CD4-positive, alpha-beta T cell (primary cell): ENCODE measurements at regions of chr19 and their contacts with region 1.

Region 1: DNA sequence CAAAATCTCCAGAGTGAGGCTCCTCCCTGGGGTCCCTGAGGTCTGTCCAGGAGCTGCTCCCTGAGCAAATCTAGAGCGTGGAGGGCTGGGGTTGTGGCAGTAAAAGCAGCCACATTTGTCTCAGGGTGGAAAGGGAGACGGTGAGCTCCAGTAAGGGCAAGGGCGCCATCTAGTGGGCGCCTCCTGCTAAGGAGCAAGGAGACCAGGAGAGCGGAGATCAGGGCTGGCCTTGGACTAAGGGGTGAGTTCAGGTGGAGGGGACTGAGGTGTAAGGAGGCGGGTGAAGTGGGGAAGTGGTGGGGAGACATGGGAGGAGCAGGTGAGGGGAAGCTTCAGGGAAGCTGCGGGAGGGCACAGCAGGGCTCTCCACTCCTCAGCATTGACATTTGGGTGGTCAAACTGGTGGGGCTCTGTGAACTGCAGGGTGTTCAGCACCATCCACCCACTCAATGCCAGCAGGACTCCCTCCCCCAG is 5.3 kb upstream of the CEACAM21 start:
- DNase-seq: peak; percentile 74 to 93 (median 84)
- ATAC-seq: peak; percentile 97
- H3K4me3 ChIP-seq: no peak overlapping the region
- H3K4me3 Mint-ChIP-seq: no peak overlapping the region
- H3K27ac ChIP-seq: no peak overlapping the region
- H3K27ac Mint-ChIP-seq: peak overlapping the region; percentile 34
- H3K4me1 ChIP-seq: peaks cover 20% of the 10 kb centered on the region
- H3K4me1 Mint-ChIP-seq: peaks cover 44% of the 10 kb centered on the region
- H3K27me3 ChIP-seq: no peaks in the 10 kb centered on the region
- H3K27me3 Mint-ChIP-seq: no peaks in the 10 kb centered on the region
- CTCF ChIP-seq: peak; percentile 95

Region 2: GRCh38 chr19:41206926-41207750 is 363.5 kb before region 1 on chr19:
- CTCF ChIA-PET with region 1: interaction called, 4 read pairs
- POLR2A ChIA-PET with region 1: no interaction called
- intact Hi-C with region 1: loop called in 1 of 2 experiments (anchors 10 kb)
- DNase-seq: no peak
- ATAC-seq: no peak
- H3K4me3 ChIP-seq: no peak overlapping the region
- H3K4me3 Mint-ChIP-seq: no peak overlapping the region
- H3K27ac ChIP-seq: no peak overlapping the region
- H3K27ac Mint-ChIP-seq: peak overlapping the region; percentile 39
- H3K4me1 ChIP-seq: peaks cover 9% of the 10 kb centered on the region
- H3K4me1 Mint-ChIP-seq: no peaks in the 10 kb centered on the region
- H3K27me3 ChIP-seq: no peaks in the 10 kb centered on the region
- H3K27me3 Mint-ChIP-seq: no peaks in the 10 kb centered on the region
- CTCF ChIP-seq: no peak

Region 3: DNA sequence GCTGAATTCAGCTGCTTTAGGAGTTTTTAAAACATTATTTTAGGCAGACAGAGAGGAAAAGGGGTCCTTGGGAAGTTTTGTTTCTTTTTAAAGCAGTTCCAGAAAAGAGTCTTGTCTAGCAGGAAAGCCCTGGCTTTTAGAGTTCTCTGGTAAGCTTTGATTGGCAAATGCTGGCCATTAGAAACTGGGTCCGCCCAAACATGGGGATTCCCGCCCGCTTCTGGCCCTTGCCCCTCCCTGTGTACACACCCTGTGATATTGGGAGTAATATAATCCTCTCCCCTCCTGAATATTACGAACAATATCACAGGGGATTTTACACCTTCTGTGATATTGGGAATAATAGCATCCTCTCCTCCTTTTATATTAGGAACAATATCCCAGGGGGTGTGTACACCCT is 68.8 kb before region 1 on chr19:
- CTCF ChIA-PET with region 1: no interaction called
- POLR2A ChIA-PET with region 1: no interaction called
- intact Hi-C with region 1: no loop called
- DNase-seq: no peak
- ATAC-seq: no peak
- H3K4me3 ChIP-seq: no peak overlapping the region
- H3K4me3 Mint-ChIP-seq: no peak overlapping the region
- H3K27ac ChIP-seq: no peak overlapping the region
- H3K27ac Mint-ChIP-seq: no peak overlapping the region
- H3K4me1 ChIP-seq: no peaks in the 10 kb centered on the region
- H3K4me1 Mint-ChIP-seq: no peaks in the 10 kb centered on the region
- H3K27me3 ChIP-seq: peaks cover 5 to 15% of the 10 kb centered on the region in 2 experiments
- H3K27me3 Mint-ChIP-seq: peaks cover 74% of the 10 kb centered on the region
- CTCF ChIP-seq: no peak

Region 4: DNA sequence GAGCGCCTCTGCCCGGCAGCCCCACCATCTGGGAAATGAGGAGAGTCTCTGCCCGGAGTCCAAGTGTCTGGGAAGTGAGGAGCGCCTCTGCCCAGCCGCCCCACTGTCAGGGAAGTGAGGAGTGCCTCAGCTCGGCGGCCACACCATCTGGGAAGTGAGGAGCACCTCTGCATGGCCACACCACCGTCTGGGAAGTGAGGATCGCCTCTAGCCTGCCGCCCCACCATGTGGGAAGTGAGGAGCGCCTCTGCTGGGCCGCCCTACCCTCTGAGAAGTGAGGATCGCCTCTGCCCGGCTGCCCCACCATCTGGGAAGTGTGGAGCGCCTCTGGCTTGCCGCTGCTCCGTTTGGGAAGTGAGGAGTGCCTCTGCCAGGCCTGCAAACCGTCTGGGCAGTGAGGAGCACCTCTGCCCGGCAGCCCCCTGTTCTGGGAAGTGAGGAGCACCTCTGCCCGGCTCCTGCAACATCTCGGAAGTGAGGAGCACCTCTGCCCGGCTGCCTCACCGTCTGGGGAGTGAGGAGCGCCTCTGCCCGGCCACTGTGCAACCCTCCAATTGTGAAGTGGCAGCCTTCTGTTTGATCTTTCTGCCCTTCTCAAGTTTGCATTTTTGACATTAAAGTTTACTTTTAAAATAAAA is 55.5 kb before region 1 on chr19:
- CTCF ChIA-PET with region 1: interaction called, 7 read pairs
- POLR2A ChIA-PET with region 1: no interaction called
- intact Hi-C with region 1: loop called (anchors 1 to 2 kb)
- DNase-seq: no peak
- ATAC-seq: no peak
- H3K4me3 ChIP-seq: no peak overlapping the region
- H3K4me3 Mint-ChIP-seq: no peak overlapping the region
- H3K27ac ChIP-seq: no peak overlapping the region
- H3K27ac Mint-ChIP-seq: no peak overlapping the region
- H3K4me1 ChIP-seq: peaks cover 5% of the 10 kb centered on the region
- H3K4me1 Mint-ChIP-seq: peaks cover 9% of the 10 kb centered on the region
- H3K27me3 ChIP-seq: peaks cover 6 to 10% of the 10 kb centered on the region in 2 experiments
- H3K27me3 Mint-ChIP-seq: peaks cover 81% of the 10 kb centered on the region
- CTCF ChIP-seq: no peak

Region 5: GRCh38 chr19:41531438-41532311 is 39.0 kb before region 1 on chr19:
- CTCF ChIA-PET with region 1: interaction called, 9 read pairs
- POLR2A ChIA-PET with region 1: interaction called, 13 read pairs
- intact Hi-C with region 1: no loop called
- DNase-seq: peak; percentile 65 to 96 (median 80)
- ATAC-seq: peak; percentile 91
- H3K4me3 ChIP-seq: peak overlapping the region; percentile 42
- H3K4me3 Mint-ChIP-seq: peak overlapping the region; percentile 67
- H3K27ac ChIP-seq: peak overlapping the region; percentile 37 to 63
- H3K27ac Mint-ChIP-seq: peak overlapping the region; percentile 78
- H3K4me1 ChIP-seq: peaks cover 41% of the 10 kb centered on the region
- H3K4me1 Mint-ChIP-seq: peaks cover 51% of the 10 kb centered on the region
- H3K27me3 ChIP-seq: no peaks in the 10 kb centered on the region
- H3K27me3 Mint-ChIP-seq: no peaks in the 10 kb centered on the region
- CTCF ChIP-seq: no peak

Region 6: DNA sequence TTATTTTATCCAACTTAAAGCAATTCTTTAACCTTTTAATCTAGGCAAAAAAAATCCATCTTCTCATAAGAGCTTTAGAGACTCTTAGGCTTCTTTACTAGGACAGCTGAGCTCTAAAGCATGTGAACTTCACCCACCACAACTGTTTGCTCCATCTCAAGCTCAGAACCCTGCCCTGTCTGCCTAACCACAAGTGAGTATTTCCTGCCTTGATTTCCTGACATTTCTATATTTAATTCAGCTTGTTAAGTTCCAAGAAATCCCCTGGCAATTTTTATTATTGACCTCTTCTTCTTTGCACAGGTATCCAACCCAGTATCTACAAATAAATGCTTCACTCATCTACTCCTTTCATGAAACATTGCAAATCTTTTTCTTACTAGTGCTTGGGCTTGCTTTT is 15.8 kb before region 1 on chr19:
- CTCF ChIA-PET with region 1: interaction called, 29 read pairs
- POLR2A ChIA-PET with region 1: interaction called, 286 read pairs
- intact Hi-C with region 1: no loop called
- DNase-seq: peak in 6 of 14 experiments; percentile 32 to 84 (median 70)
- ATAC-seq: peak; percentile 72
- H3K4me3 ChIP-seq: peak overlapping the region; percentile 74
- H3K4me3 Mint-ChIP-seq: peak overlapping the region; percentile 97
- H3K27ac ChIP-seq: peak overlapping the region; percentile 42 to 63
- H3K27ac Mint-ChIP-seq: peak overlapping the region; percentile 82
- H3K4me1 ChIP-seq: peaks cover 37% of the 10 kb centered on the region
- H3K4me1 Mint-ChIP-seq: peaks cover 75% of the 10 kb centered on the region
- H3K27me3 ChIP-seq: no peaks in the 10 kb centered on the region
- H3K27me3 Mint-ChIP-seq: no peaks in the 10 kb centered on the region
- CTCF ChIP-seq: no peak

Region 7: GRCh38 chr19:41627966-41628675 is 57.4 kb after region 1 on chr19:
- CTCF ChIA-PET with region 1: no interaction called
- POLR2A ChIA-PET with region 1: no interaction called
- intact Hi-C with region 1: no loop called
- DNase-seq: no peak
- ATAC-seq: no peak
- H3K4me3 ChIP-seq: no peak overlapping the region
- H3K4me3 Mint-ChIP-seq: no peak overlapping the region
- H3K27ac ChIP-seq: no peak overlapping the region
- H3K27ac Mint-ChIP-seq: no peak overlapping the region
- H3K4me1 ChIP-seq: no peaks in the 10 kb centered on the region
- H3K4me1 Mint-ChIP-seq: no peaks in the 10 kb centered on the region
- H3K27me3 ChIP-seq: peaks cover 18 to 22% of the 10 kb centered on the region in 2 experiments
- H3K27me3 Mint-ChIP-seq: peaks cover 34% of the 10 kb centered on the region
- CTCF ChIP-seq: no peak